Heart left ventricle (tissue), 16 donors: ENCODE measurements at regions of chr2 and their contacts with region 1.

Region 1: GRCh38 chr2:56464613-56465012 is 280.8 kb downstream of the CCDC85A start:
- DNase-seq: no peak
- ATAC-seq: no peak
- H3K4me3 ChIP-seq: no peak overlapping the region
- H3K27ac ChIP-seq: no peak overlapping the region
- H3K4me1 ChIP-seq: no peaks in the 10 kb centered on the region
- H3K27me3 ChIP-seq: no peaks in the 10 kb centered on the region
- CTCF ChIP-seq: no peak
- POLR2A ChIP-seq: no peak

Region 2: GRCh38 chr2:56334622-56335021 is 130.0 kb before region 1 on chr2:
- intact Hi-C with region 1: loop called in 1 of 10 experiments (anchors 10 kb)
- DNase-seq: no peak
- ATAC-seq: peak in 2 of 4 donors; percentile 50 to 83
- H3K4me3 ChIP-seq: no peak overlapping the region
- H3K27ac ChIP-seq: peak overlapping the region in 8 of 12 donors; percentile 7 to 60 (median 36)
- H3K4me1 ChIP-seq: peaks cover 0 to 49% (median 20%) of the 10 kb centered on the region in 12 donors
- H3K27me3 ChIP-seq: no peaks in the 10 kb centered on the region
- CTCF ChIP-seq: no peak
- POLR2A ChIP-seq: no peak

Region 3: DNA sequence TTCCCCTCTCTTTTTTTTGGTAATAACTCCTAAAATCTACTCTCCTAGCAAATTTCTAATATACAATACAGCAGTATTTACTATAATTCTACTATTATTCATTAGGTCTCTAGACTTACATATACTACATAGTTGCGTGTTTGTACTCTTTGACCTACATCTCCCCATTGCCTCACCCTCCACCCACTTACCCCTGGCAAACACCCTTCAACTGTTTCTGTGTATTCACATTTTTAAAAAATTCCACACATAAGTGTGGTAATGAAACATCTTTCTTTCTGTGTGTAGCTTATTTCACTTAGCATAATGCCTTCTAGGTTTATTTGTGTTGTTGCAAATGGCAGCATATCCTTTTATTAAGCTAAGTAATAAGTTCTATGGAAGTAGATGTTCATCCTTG is 55.2 kb after region 1 on chr2:
- intact Hi-C with region 1: no loop called
- DNase-seq: no peak
- ATAC-seq: no peak
- H3K4me3 ChIP-seq: no peak overlapping the region
- H3K27ac ChIP-seq: no peak overlapping the region
- H3K4me1 ChIP-seq: peaks cover 0 to 9% (median 3%) of the 10 kb centered on the region in 12 donors
- H3K27me3 ChIP-seq: no peaks in the 10 kb centered on the region
- CTCF ChIP-seq: no peak
- POLR2A ChIP-seq: no peak